AG04450 (cell line): ENCODE measurements at regions of chr2 and their contacts with region 1.

Region 1: DNA sequence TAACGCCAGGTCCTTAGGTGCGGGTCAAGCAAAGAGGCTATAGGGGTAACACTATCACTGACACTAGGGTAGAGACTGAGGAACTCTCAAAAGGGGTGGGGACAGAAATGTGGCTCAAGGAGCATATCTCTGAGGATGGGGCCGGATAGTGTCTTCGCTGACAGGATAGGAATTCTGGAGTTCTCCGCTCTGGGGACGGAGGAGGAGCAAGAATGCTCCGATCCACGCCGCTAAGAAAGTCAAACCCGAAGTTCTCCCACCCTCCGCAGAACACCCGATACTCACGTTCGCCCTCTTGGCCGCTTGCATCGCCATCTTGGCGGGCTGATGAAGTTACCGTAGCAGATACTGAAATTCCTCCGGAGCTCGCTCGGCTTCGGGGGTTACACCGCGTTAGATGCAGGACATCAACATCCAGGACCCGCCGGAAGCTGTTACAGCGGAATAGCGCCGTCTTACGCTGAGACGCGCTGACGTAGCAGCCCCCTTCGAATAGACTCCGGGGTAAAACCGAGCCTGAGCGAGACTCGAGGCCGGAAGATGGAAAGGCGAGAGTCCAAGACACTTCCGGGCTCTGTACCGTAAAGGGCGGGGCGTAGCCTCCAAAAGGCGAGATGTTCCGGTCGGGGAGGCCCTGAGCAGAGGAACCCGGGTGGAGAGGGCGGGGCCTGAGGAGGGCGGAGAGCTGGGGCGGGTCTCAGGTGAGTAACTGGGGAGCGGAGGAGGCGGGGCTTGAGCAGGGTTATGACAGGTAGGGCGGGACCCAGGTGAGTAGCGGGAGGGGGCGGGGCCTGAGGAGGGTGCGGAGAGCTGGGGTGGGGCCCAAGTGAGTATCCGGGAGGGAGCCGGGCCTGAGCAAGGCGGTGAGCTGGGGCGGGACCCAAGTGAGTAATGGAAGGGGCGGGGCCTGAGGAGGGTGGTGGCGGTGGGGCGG is at the start of gene SF3B6:
- DNase-seq: peak; percentile 96
- H3K4me3 ChIP-seq: peak within 1 kb of the TSS; percentile 98
- H3K27ac ChIP-seq: peak within 1 kb of the TSS; percentile 88
- H3K27me3 ChIP-seq: no peaks in the 10 kb centered on the region
- CTCF ChIP-seq: no peak
- polyA plus RNA-seq, gene SF3B6: 209 and 272 TPM in 2 replicates

Region 2: GRCh38 chr2:24046930-24047702 is 29.1 kb before region 1 on chr2 and contains the start of gene WDCP:
- CTCF ChIA-PET with region 1: no interaction called
- POLR2A ChIA-PET with region 1: interaction called, 18 read pairs
- DNase-seq: peak; percentile 97
- H3K4me3 ChIP-seq: peak within 1 kb of the TSS; percentile 91
- H3K27ac ChIP-seq: peak within 1 kb of the TSS; percentile 31
- H3K27me3 ChIP-seq: no peaks in the 10 kb centered on the region
- CTCF ChIP-seq: no peak
- polyA plus RNA-seq, gene WDCP: 13.6 and 16.1 TPM in 2 replicates